ENCODE measurements at regions of chr11 and their contacts with region 1.

Region 1: GRCh38 chr11:62427630-62428233 is 8.9 kb downstream of the SCGB1A1 start:
- DNase-seq: no peak
- H3K4me3 ChIP-seq: no peak overlapping the region
- H3K27ac ChIP-seq: peak overlapping the region; percentile 38 to 80 (median 57)
- H3K4me1 ChIP-seq: peaks cover 8 to 62% (median 39%) of the 10 kb centered on the region in 4 donors
- H3K27me3 ChIP-seq: no peaks in the 10 kb centered on the region
- CTCF ChIP-seq: no peak
- EP300 ChIP-seq: no peak
- POLR2A ChIP-seq: no peak

Region 2: DNA sequence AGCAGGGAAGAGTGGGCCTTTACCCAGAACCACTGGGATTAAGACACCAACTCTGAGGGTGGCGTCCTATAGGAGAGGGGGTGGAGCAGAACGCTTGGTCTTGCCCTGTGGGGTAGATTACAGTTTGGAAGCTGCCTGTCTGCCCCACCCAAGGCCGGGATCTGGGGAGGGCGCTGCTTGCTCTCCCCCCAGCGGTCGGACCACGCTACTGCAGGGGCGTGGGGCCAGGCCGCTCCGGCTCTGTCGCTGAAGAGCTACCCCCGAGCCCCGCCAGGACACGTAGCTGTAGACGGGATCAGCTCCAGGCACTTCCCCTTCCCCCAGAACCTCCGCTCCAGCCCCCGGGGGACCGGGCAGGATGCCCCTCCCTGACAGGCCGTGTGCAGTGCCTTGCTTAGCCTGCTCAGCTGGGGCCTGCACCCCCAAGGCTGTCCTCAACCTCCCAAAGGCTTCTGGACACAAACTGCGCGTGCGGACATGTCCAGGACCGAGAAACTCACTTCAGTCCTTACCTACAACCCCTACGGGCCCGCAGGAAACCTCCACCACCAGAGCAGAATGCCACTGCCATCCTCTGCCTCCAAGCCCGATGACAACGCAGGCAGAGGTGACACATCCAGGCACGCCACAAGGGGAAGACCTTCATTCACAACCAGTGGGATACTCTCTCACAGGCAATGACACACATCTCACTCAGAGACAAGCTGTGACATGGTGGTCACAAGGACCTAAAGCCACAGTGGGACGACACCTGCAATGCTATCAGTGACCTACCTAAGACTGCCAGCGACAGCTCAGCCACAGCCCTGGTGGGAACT is 115.2 kb after region 1 on chr11:
- in situ Hi-C with region 1: loop called in 1 of 4 experiments (anchors 10 kb)
- intact Hi-C with region 1: loop called (anchors 2 kb)
- DNase-seq: peak; percentile 87
- H3K4me3 ChIP-seq: peak overlapping the region; percentile 74 to 96 (median 80)
- H3K27ac ChIP-seq: peak overlapping the region; percentile 96 to 100 (median 97)
- H3K4me1 ChIP-seq: peaks cover 52 to 80% (median 71%) of the 10 kb centered on the region in 4 donors
- H3K27me3 ChIP-seq: no peaks in the 10 kb centered on the region
- CTCF ChIP-seq: peak; percentile 99 to 100 (median 99)
- EP300 ChIP-seq: no peak
- POLR2A ChIP-seq: no peak

Region 3: DNA sequence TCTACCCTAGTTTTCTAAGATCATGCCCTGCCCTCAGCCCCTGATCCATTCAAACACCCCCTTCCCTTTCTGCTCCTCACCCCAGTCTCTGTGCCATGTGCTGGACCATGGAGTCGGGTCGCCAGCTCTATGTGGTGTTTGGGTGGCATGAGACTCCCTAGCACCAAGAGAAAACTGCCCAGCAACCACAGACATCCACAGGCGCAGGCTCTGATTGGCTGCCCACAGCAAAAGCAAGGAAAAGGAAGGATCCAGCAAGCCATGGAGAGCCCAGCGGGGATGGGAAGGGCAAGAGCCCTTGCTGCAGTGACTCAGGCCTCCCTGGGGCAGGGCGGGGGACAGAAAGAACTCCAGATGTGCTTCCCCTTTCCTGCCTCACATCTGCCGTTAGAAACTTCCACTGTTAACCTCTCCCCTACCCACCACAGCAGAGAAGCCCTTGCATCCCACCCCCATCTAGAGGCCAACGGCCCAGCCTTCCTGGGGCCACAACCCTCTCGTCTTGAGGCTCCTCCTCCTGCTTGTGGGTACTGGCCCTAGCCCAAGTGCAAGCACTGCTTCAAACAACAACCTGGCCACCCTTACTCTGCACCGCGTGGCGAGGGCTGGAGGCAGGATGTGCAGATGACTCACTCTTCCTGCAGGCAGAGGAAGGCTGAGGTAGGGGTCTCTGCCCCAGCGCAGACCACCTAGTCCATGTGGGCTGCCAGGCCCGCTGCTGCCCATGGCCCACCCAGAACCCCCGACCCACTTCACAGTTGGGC is 128.6 kb after region 1 on chr11:
- in situ Hi-C with region 1: loop called in 3 of 4 experiments (anchors 10 kb)
- intact Hi-C with region 1: no loop called
- DNase-seq: peak; percentile 90
- H3K4me3 ChIP-seq: peak overlapping the region in 2 of 4 donors; percentile 0 to 6
- H3K27ac ChIP-seq: peak overlapping the region; percentile 96 to 100 (median 97)
- H3K4me1 ChIP-seq: peaks cover 73 to 86% (median 79%) of the 10 kb centered on the region in 4 donors
- H3K27me3 ChIP-seq: no peaks in the 10 kb centered on the region
- CTCF ChIP-seq: no peak
- EP300 ChIP-seq: no peak
- POLR2A ChIP-seq: peak; percentile 31

Measured in transverse colon (tissue), 4 donors.